ENCODE measurements at regions of chr1 and their contacts with region 1.

Region 1: GRCh38 chr1:27392096-27392777 is at the start of gene GPR3:
- DNase-seq: peak; percentile 78 to 88 (median 78)
- ATAC-seq: peak; percentile 75 to 81 (median 75)
- H3K4me3 ChIP-seq: peak within 1 kb of the TSS; percentile 38 to 41 (median 40)
- H3K27ac ChIP-seq: peak within 1 kb of the TSS in 2 of 3 donors; percentile 33 to 44
- H3K4me1 ChIP-seq: peaks cover 0 to 6% (median 0%) of the 10 kb centered on the region in 4 donors
- H3K27me3 ChIP-seq: no peaks in the 10 kb centered on the region
- CTCF ChIP-seq: peak; percentile 16 to 44 (median 41)
- POLR2A ChIP-seq: no peak
- total RNA-seq, gene GPR3: 0.19 to 0.43 TPM in 2 of 6 experiments, not detected in the others

Region 2: GRCh38 chr1:27300341-27301051 is 91.7 kb before region 1 on chr1:
- intact Hi-C with region 1: loop called (anchors 5 kb)
- DNase-seq: peak; percentile 81 to 83 (median 83)
- ATAC-seq: peak; percentile 89 to 94 (median 92)
- H3K4me3 ChIP-seq: no peak overlapping the region
- H3K27ac ChIP-seq: peak overlapping the region in 2 of 3 donors; percentile 21 to 43
- H3K4me1 ChIP-seq: no peaks in the 10 kb centered on the region
- H3K27me3 ChIP-seq: no peaks in the 10 kb centered on the region
- CTCF ChIP-seq: peak; percentile 97 to 99 (median 98)
- POLR2A ChIP-seq: no peak

Region 3: GRCh38 chr1:27341525-27342252 is 50.5 kb before region 1 on chr1 and contains the start of gene SYTL1:
- intact Hi-C with region 1: no loop called
- DNase-seq: peak in 1 of 3 donors; percentile 49
- ATAC-seq: peak; percentile 39 to 56 (median 54)
- H3K4me3 ChIP-seq: peak within 1 kb of the TSS in 2 of 3 donors; percentile 0 to 21
- H3K27ac ChIP-seq: peak within 1 kb of the TSS in 2 of 3 donors; percentile 22 to 62
- H3K4me1 ChIP-seq: no peaks in the 10 kb centered on the region
- H3K27me3 ChIP-seq: no peaks in the 10 kb centered on the region
- CTCF ChIP-seq: no peak
- POLR2A ChIP-seq: no peak
- total RNA-seq, gene SYTL1: 0.37 to 1.7 (median 0.80) TPM

Region 4: DNA sequence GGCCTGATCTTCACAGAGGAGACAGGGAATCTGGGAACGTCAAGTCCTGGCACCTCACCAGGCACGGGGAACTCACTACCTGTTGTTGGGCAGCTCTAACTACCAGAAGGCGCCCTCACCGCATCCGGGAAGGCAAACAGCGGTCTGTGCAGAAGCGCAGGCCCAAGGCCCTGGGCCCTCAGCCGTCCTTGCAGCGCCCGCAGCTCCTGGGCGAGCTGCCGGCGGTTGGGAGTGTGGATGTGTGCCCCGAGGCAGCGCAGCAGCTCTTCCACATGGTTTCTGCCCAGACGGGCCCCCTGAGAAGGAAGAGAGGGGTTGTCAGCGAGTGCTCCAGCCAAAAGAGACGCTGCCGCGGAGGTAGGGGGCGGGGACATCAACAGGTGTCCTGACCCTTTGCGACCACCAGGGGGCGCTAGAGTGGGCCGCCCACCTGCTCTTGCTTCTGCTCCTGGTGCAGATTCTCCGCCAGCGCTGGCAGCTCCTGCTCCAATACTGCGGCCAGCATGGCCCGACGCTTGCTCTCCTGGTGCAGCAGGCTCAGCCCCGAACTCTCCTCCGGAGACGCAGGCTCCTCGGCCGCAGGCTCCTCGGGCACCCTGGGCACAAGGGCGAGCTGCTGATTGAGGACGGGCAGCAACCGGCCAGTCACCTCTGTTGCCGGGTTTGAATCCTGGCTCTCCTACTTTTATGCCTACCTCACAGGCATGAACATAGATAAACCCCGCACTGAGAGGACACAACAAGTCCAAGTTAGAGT is 34.8 kb before region 1 on chr1:
- intact Hi-C with region 1: loop called in 1 of 2 experiments (anchors 5 kb)
- DNase-seq: peak; percentile 81 to 86 (median 81)
- ATAC-seq: peak; percentile 81 to 93 (median 89)
- H3K4me3 ChIP-seq: peak overlapping the region in 1 of 3 donors; percentile 12
- H3K27ac ChIP-seq: no peak overlapping the region
- H3K4me1 ChIP-seq: peaks cover 0 to 8% (median 2%) of the 10 kb centered on the region in 4 donors
- H3K27me3 ChIP-seq: no peaks in the 10 kb centered on the region
- CTCF ChIP-seq: peak; percentile 92 to 100 (median 98)
- POLR2A ChIP-seq: no peak

Measured in right lobe of liver (tissue), 6 donors.